ENCODE measurements at regions of chr14 and their contacts with region 1.

Region 1: GRCh38 chr14:53875324-53875897 is 81.2 kb downstream of the BMP4 start:
- DNase-seq: no peak
- ATAC-seq: peak; percentile 18 to 48 (median 32)
- H3K4me3 ChIP-seq: no peak overlapping the region
- H3K27ac ChIP-seq: peak overlapping the region in 7 of 12 donors; percentile 27 to 64 (median 57)
- H3K4me1 ChIP-seq: peaks cover 0 to 46% (median 12%) of the 10 kb centered on the region in 12 donors
- H3K27me3 ChIP-seq: no peaks in the 10 kb centered on the region
- CTCF ChIP-seq: no peak
- POLR2A ChIP-seq: no peak

Region 2: GRCh38 chr14:53715193-53715721 is 160.2 kb before region 1 on chr14:
- intact Hi-C with region 1: loop called in 2 of 10 experiments (anchors 5 kb)
- DNase-seq: no peak
- ATAC-seq: peak; percentile 59 to 92 (median 82)
- H3K4me3 ChIP-seq: peak overlapping the region in 8 of 12 donors; percentile 5 to 41 (median 14)
- H3K27ac ChIP-seq: peak overlapping the region; percentile 27 to 76 (median 53)
- H3K4me1 ChIP-seq: peaks cover 0 to 36% (median 13%) of the 10 kb centered on the region in 12 donors
- H3K27me3 ChIP-seq: no peaks in the 10 kb centered on the region
- CTCF ChIP-seq: no peak
- POLR2A ChIP-seq: no peak

Measured in heart left ventricle (tissue), 16 donors.